ENCODE measurements at regions of chr4 and their contacts with region 1.

Region 1: DNA sequence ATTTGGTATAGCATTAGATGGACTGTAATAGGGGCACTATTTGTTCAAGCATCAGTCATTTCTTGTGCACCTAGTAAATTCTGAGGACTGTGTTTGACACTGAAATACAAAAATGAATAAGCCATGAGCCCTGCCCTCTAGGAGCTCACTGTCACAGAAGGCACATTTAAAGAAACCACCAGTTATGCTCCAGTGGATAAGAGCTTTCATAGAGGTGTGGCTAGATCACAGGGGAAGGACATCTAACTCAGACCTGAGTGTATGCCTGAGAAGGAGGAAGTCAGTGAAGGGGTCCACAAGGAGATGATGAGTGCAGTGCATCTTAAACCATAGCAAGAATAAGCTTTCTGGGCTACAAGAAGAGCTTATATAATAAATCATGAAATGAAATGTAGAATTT is 40.1 kb downstream of the BTC start:
- DNase-seq: no peak
- H3K4me3 ChIP-seq: no peak overlapping the region
- H3K27ac ChIP-seq: no peak overlapping the region
- H3K4me1 ChIP-seq: peaks cover 0 to 12% (median 6%) of the 10 kb centered on the region in 4 donors
- H3K27me3 ChIP-seq: no peaks in the 10 kb centered on the region
- CTCF ChIP-seq: no peak

Region 2: GRCh38 chr4:74437866-74438265 is 316.4 kb before region 1 on chr4:
- intact Hi-C with region 1: loop called (anchors 5 kb)
- DNase-seq: no peak
- H3K4me3 ChIP-seq: no peak overlapping the region
- H3K27ac ChIP-seq: no peak overlapping the region
- H3K4me1 ChIP-seq: no peaks in the 10 kb centered on the region
- H3K27me3 ChIP-seq: no peaks in the 10 kb centered on the region
- CTCF ChIP-seq: no peak

Measured in tibial artery (tissue), 4 donors.